ENCODE measurements at regions of chr14 and their contacts with region 1.

Region 1: DNA sequence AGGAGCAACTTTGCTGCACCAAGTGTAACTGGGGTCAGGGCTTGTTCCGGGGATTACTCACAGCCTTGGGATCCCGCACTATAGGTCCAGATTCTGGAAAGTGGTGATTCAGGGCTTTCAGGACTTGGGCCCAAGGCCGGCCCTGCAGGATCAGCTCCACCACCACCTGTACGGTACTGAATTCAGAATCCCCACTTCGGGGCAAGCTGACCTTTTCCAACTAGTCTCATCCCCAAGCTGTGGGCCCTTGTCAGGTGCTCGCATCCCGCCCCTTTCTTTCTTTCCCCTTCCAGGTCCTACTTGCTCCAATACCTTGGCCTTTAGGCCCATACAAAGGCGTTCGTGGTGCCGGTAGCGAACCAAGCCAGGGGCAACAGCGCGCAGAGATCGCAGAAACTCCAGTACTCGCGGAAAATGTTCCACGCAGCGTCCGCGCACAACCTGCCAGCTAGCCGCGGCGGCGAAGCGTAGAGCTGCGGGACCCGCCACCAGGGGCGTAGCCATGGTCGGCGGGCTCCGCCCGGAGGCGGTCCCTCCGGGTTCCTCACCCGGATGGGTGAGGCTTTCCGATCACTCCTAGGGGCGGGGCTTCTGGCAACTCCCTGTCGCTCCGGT is 487 bp downstream of the TINF2 start:
- H3K4me3 ChIP-seq: peak overlapping the region; percentile 78
- H3K27ac ChIP-seq: peak overlapping the region; percentile 75
- H3K4me1 ChIP-seq: no peaks in the 10 kb centered on the region
- CTCF ChIP-seq: peak; percentile 84

Region 2: GRCh38 chr14:23160924-23161538 is 1080.9 kb before region 1 on chr14:
- CTCF ChIA-PET with region 1: no interaction called
- POLR2A ChIA-PET with region 1: interaction called, 10 read pairs
- H3K4me3 ChIP-seq: no peak overlapping the region
- H3K27ac ChIP-seq: no peak overlapping the region
- H3K4me1 ChIP-seq: no peaks in the 10 kb centered on the region; the same call in 1 of the 2 replicates
- CTCF ChIP-seq: no peak

Region 3: GRCh38 chr14:24195191-24196070 is 46.5 kb before region 1 on chr14 and contains the start of gene TM9SF1:
- CTCF ChIA-PET with region 1: interaction called, 5 read pairs
- POLR2A ChIA-PET with region 1: interaction called, 14 read pairs
- H3K4me3 ChIP-seq: peak within 1 kb of the TSS; percentile 89
- H3K27ac ChIP-seq: peak within 1 kb of the TSS; percentile 97
- H3K4me1 ChIP-seq: peaks cover 4% of the 10 kb centered on the region; the same call in 1 of the 2 replicates
- CTCF ChIP-seq: 0 out of 2 replicates have a peak, but pooled peaks have one; percentile 29

Region 4: DNA sequence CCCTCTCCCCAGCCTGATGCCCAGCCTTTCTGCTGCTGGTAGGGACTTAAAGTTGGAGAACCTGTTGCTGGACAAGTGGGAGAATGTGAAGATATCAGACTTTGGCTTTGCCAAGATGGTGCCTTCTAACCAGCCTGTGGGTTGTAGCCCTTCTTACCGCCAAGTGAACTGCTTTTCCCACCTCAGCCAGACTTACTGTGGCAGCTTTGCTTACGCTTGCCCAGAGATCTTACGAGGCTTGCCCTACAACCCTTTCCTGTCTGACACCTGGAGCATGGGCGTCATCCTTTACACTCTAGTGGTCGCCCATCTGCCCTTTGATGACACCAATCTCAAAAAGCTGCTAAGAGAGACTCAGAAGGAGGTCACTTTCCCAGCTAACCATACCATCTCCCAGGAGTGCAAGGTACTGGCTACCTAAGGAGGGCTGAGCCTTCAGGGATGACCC is 34.8 kb before region 1 on chr14:
- CTCF ChIA-PET with region 1: no interaction called
- POLR2A ChIA-PET with region 1: no interaction called
- H3K4me3 ChIP-seq: no peak overlapping the region
- H3K27ac ChIP-seq: no peak overlapping the region
- H3K4me1 ChIP-seq: no peaks in the 10 kb centered on the region
- CTCF ChIP-seq: no peak

Region 5: DNA sequence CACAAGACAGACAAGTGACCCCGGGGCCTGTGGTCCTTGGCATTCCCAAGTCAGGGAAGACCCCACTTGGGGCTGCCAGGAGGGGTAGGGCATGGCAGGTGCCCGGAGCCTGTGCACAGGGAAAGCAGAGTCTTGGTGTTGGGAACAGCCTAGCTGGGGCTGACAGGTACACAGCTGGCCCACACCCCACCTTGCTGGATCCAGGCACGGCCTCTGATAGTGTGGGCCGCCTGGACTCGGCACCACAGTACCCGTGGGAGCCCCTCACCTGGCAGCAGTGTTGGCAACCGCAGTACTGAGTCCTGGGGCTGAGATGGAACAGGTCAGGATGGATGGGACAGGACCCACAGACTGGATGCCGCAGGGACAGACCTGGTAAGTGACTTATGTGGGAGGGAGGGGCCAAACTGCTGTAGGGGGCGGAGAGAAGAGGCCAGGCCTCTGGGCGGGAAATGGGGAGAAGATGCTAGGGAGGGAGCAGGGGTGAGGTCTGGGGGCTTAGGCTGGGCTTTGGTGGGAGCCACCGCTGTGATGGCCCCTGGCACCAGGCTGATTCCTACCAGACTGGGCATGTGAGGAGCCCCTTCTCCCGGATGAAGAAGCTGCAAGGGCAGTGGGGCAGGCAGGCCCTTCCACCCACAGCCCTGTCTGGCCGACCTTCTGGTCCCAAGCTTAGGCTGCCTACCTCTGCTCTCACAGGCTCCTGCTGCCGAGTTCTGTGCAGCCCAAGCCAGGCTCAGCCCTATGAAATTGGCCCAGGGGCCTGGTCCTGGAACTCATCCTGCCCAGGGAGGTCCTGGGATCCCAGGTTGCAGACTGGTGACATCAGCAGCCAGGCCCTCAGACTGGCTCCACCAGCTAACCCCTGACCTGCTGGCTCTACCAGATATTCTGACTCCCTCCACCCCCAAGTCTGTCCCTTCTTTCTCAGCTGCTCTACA is 21.2 kb after region 1 on chr14 and contains the start of gene TGM1:
- CTCF ChIA-PET with region 1: interaction called, 6 read pairs
- POLR2A ChIA-PET with region 1: interaction called, 14 read pairs
- H3K4me3 ChIP-seq: no peak within 1 kb of the TSS
- H3K27ac ChIP-seq: no peak within 1 kb of the TSS
- H3K4me1 ChIP-seq: no peaks in the 10 kb centered on the region
- CTCF ChIP-seq: no peak

Region 6: GRCh38 chr14:24299255-24300195 is 57.6 kb after region 1 on chr14 and contains the starts of genes DHRS1 and NOP9:
- CTCF ChIA-PET with region 1: interaction called, 133 read pairs
- POLR2A ChIA-PET with region 1: interaction called, 62 read pairs
- H3K4me3 ChIP-seq: peak within 1 kb of the TSS; percentile 85
- H3K27ac ChIP-seq: peak within 1 kb of the TSS; percentile 71
- H3K4me1 ChIP-seq: peaks cover 12% of the 10 kb centered on the region
- CTCF ChIP-seq: no peak

Region 7: DNA sequence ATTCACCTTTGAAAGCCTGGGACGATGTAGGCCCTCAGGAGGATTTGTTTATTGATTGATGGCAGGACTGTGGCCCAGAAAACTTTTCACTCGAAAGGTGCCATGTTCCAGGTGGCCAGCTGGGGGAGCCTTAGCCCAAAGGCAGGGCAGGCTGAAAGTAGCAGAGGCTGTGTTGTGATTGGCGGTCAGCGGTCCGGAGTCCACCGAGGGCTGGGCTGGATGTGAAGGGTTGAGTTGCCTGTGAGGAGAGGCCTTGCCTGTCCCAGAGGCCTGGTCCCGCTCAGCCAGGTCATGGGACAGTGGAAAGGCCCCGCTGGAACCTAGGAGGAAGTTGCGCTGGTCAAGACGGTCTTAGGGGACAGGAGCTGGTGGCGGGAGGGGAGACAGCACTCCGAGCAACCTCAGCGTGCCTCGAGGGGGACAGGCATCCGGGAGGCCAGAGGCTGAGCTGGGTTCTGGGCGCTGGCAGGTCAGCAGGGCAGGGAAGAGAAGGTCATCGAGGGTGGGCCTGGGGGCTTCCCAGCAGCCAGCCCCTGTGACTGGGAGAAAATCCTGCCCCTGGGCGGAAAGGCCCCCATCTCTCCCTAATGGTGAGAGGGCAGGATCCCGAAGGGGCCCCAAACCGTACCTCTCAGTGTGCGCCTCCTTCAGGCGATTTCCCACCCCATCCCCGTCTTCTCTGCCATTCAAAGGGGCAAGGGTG is 239.8 kb after region 1 on chr14:
- CTCF ChIA-PET with region 1: no interaction called
- POLR2A ChIA-PET with region 1: no interaction called
- H3K4me3 ChIP-seq: no peak overlapping the region
- H3K27ac ChIP-seq: no peak overlapping the region
- H3K4me1 ChIP-seq: no peaks in the 10 kb centered on the region
- CTCF ChIP-seq: no peak

Measured in HEK293 (cell line).